Naive thymus-derived CD4-positive, alpha-beta T cell (primary cell): ENCODE measurements at regions of chr4 and their contacts with region 1.

Region 1: DNA sequence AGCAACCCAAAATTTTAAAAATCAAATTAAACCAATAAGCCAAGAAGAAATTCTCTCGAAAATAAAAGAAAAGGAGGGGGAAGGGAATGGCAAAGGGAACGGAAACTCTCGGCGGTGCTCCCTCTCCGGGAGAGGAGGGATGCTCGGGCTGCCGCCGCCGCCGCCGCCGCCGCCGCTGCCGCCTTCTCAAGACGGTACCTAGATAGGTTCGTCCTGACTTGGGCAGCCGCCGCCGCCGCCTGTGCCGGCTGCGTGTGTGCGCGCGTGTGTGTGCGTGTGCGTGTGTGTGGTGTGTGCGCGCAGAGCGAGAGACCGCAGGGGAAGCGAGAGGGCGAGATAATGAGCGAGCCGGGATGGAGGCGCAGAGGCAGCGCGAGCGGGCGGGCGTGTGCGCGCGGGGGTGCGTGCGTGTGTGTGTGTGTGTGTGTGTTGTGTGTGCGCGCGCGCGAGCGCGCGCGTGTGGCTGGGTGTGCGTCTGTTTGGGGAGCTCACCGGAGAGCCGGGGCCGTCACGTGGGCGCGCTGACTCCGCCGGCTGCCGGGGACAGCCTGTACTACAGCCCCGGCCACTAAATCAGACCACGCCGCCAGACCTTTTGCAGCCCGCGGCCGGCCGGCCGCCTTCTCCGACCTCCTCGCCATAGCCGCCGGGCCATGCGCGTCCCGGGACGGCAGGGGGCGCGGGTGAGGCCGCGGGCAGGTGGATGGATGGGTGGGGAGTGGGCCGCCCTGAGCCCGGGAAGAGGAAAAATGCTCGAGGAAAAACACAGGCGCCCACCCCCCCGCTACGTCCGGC is 111.6 kb downstream of the DHX15 start:
- DNase-seq: peak; percentile 35 to 65 (median 59)
- ATAC-seq: peak; percentile 84
- H3K4me3 ChIP-seq: peak overlapping the region; percentile 29
- H3K4me3 Mint-ChIP-seq: peak overlapping the region; percentile 88 to 97 (median 94)
- H3K27ac ChIP-seq: no peak overlapping the region
- H3K27ac Mint-ChIP-seq: peak overlapping the region in 7 of 9 donors; percentile 79 to 94 (median 85)
- H3K4me1 ChIP-seq: peaks cover 0 to 6% of the 10 kb centered on the region in 2 donors
- H3K4me1 Mint-ChIP-seq: peaks cover 23 to 42% (median 33%) of the 10 kb centered on the region in 7 donors
- H3K27me3 ChIP-seq: peaks cover 0 to 21% of the 10 kb centered on the region in 2 donors
- H3K27me3 Mint-ChIP-seq: peaks cover 56 to 85% (median 78%) of the 10 kb centered on the region in 5 donors

Region 2: GRCh38 chr4:24456431-24456830 is 16.3 kb before region 1 on chr4:
- CTCF ChIA-PET with region 1: no interaction called
- POLR2A ChIA-PET with region 1: no interaction called
- intact Hi-C with region 1: no loop called
- DNase-seq: no peak
- ATAC-seq: no peak
- H3K4me3 ChIP-seq: no peak overlapping the region
- H3K4me3 Mint-ChIP-seq: no peak overlapping the region
- H3K27ac ChIP-seq: no peak overlapping the region
- H3K27ac Mint-ChIP-seq: no peak overlapping the region
- H3K4me1 ChIP-seq: no peaks in the 10 kb centered on the region
- H3K4me1 Mint-ChIP-seq: no peaks in the 10 kb centered on the region
- H3K27me3 ChIP-seq: no peaks in the 10 kb centered on the region
- H3K27me3 Mint-ChIP-seq: peaks cover 8 to 26% (median 17%) of the 10 kb centered on the region in 5 donors

Region 3: DNA sequence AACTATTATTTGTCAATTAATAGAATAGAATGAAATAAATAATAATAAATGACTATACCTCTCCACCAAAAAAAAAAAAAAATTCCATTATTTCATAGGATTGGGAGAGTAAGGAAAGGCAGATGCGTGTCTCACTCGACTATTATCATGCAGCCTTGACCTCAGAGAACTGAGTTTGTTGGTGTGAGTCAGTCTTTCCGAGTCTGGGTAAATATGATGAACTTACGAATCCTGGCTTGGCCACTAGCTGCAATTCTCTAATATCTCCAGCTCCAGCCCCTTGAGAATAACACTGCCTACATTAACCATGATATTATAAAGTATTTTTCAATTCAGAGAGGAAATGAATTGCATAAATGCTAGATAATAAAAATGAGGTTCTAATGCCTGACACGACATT is 158.2 kb after region 1 on chr4:
- CTCF ChIA-PET with region 1: no interaction called
- POLR2A ChIA-PET with region 1: no interaction called
- intact Hi-C with region 1: no loop called
- DNase-seq: no peak
- ATAC-seq: no peak
- H3K4me3 ChIP-seq: no peak overlapping the region
- H3K4me3 Mint-ChIP-seq: no peak overlapping the region
- H3K27ac ChIP-seq: no peak overlapping the region
- H3K27ac Mint-ChIP-seq: no peak overlapping the region
- H3K4me1 ChIP-seq: no peaks in the 10 kb centered on the region
- H3K4me1 Mint-ChIP-seq: no peaks in the 10 kb centered on the region
- H3K27me3 ChIP-seq: no peaks in the 10 kb centered on the region
- H3K27me3 Mint-ChIP-seq: peaks cover 4 to 24% (median 20%) of the 10 kb centered on the region in 5 donors

Region 4: GRCh38 chr4:25376754-25377571 is 904.3 kb after region 1 on chr4 and contains the start of gene ANAPC4:
- CTCF ChIA-PET with region 1: no interaction called
- POLR2A ChIA-PET with region 1: no interaction called
- intact Hi-C with region 1: loop called (anchors 2 to 10 kb)
- DNase-seq: peak; percentile 85 to 97 (median 92)
- ATAC-seq: peak; percentile 97
- H3K4me3 ChIP-seq: peak within 1 kb of the TSS; percentile 96
- H3K4me3 Mint-ChIP-seq: peak within 1 kb of the TSS in 2 of 10 donors; percentile 78 to 83
- H3K27ac ChIP-seq: peak within 1 kb of the TSS; percentile 76
- H3K27ac Mint-ChIP-seq: peak within 1 kb of the TSS in 7 of 9 donors; percentile 64 to 93 (median 83)
- H3K4me1 ChIP-seq: peaks cover 11 to 17% of the 10 kb centered on the region in 2 donors
- H3K4me1 Mint-ChIP-seq: peaks cover 0 to 18% (median 13%) of the 10 kb centered on the region in 7 donors
- H3K27me3 ChIP-seq: no peaks in the 10 kb centered on the region
- H3K27me3 Mint-ChIP-seq: no peaks in the 10 kb centered on the region
- total RNA-seq, gene ANAPC4: 40.6 to 55.3 (median 50.4) TPM